Activated B cell treated with CpG ODN at 0.5 μM for 24 hours (primary cell): ENCODE measurements at regions of chr4 and their contacts with region 1.

Region 1: GRCh38 chr4:98995183-98996055 is at the start of gene METAP1:
- DNase-seq: peak; percentile 92
- ATAC-seq: peak; percentile 87
- H3K4me3 Mint-ChIP-seq: peak within 1 kb of the TSS; percentile 86
- H3K27ac Mint-ChIP-seq: peak within 1 kb of the TSS; percentile 94
- H3K4me1 Mint-ChIP-seq: peaks cover 25% of the 10 kb centered on the region
- H3K27me3 Mint-ChIP-seq: no peaks in the 10 kb centered on the region
- CTCF ChIP-seq: no peak
- total RNA-seq, gene METAP1: 29.9 and 38.6 TPM in 2 replicates

Region 2: GRCh38 chr4:98260579-98261290 is 734.7 kb before region 1 on chr4:
- CTCF ChIA-PET with region 1: no interaction called
- POLR2A ChIA-PET with region 1: interaction called, 12 read pairs
- intact Hi-C with region 1: loop called (anchors 1 kb)
- DNase-seq: peak; percentile 89
- ATAC-seq: peak; percentile 93
- H3K4me3 Mint-ChIP-seq: peak overlapping the region; percentile 95
- H3K27ac Mint-ChIP-seq: peak overlapping the region; percentile 94
- H3K4me1 Mint-ChIP-seq: peaks cover 48% of the 10 kb centered on the region
- H3K27me3 Mint-ChIP-seq: no peaks in the 10 kb centered on the region
- CTCF ChIP-seq: no peak

Region 3: GRCh38 chr4:98433691-98434090 is 561.7 kb before region 1 on chr4:
- CTCF ChIA-PET with region 1: no interaction called
- POLR2A ChIA-PET with region 1: no interaction called
- intact Hi-C with region 1: no loop called
- DNase-seq: no peak
- ATAC-seq: no peak
- H3K4me3 Mint-ChIP-seq: no peak overlapping the region
- H3K27ac Mint-ChIP-seq: no peak overlapping the region
- H3K4me1 Mint-ChIP-seq: no peaks in the 10 kb centered on the region
- H3K27me3 Mint-ChIP-seq: no peaks in the 10 kb centered on the region
- CTCF ChIP-seq: no peak

Region 4: GRCh38 chr4:98658287-98659105 is 336.9 kb before region 1 on chr4 and contains the start of gene TSPAN5:
- CTCF ChIA-PET with region 1: no interaction called
- POLR2A ChIA-PET with region 1: interaction called, 6 read pairs
- intact Hi-C with region 1: loop called (anchors 1 kb)
- DNase-seq: peak; percentile 78
- ATAC-seq: peak; percentile 86
- H3K4me3 Mint-ChIP-seq: peak within 1 kb of the TSS; percentile 92
- H3K27ac Mint-ChIP-seq: peak within 1 kb of the TSS; percentile 68
- H3K4me1 Mint-ChIP-seq: peaks cover 51% of the 10 kb centered on the region
- H3K27me3 Mint-ChIP-seq: peaks cover 7% of the 10 kb centered on the region
- CTCF ChIP-seq: no peak
- total RNA-seq, gene TSPAN5: 1.6 and 2.7 TPM in 2 replicates

Region 5: DNA sequence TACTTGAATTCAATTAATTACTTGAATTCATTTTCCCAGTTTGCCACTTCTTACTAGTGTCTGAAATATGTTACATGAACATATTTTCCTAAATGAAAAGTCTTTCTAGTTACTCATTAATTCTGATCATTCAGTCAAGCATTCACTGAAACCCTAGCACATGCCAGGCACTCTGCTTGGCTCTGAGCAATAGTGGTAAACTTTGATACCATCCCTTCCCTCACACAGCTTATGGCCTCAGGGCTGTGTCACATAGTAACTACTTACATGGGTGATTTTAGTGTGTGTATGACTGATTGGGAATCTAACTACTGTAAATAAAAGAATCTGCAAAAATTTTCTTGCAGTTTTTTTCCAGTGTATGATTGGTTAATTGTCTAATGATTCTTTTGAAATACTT is 32.8 kb after region 1 on chr4:
- CTCF ChIA-PET with region 1: no interaction called
- POLR2A ChIA-PET with region 1: interaction called, 3 read pairs
- intact Hi-C with region 1: loop called (anchors 1 kb)
- DNase-seq: no peak
- ATAC-seq: peak; percentile 56
- H3K4me3 Mint-ChIP-seq: no peak overlapping the region
- H3K27ac Mint-ChIP-seq: peak overlapping the region; percentile 13
- H3K4me1 Mint-ChIP-seq: peaks cover 62% of the 10 kb centered on the region
- H3K27me3 Mint-ChIP-seq: no peaks in the 10 kb centered on the region
- CTCF ChIP-seq: no peak

Region 6: GRCh38 chr4:99405433-99406115 is 410.2 kb after region 1 on chr4:
- CTCF ChIA-PET with region 1: interaction called, 16 read pairs
- POLR2A ChIA-PET with region 1: no interaction called
- intact Hi-C with region 1: loop called (anchors 1 kb)
- DNase-seq: no peak
- ATAC-seq: peak; percentile 69
- H3K4me3 Mint-ChIP-seq: no peak overlapping the region
- H3K27ac Mint-ChIP-seq: no peak overlapping the region
- H3K4me1 Mint-ChIP-seq: peaks cover 7% of the 10 kb centered on the region
- H3K27me3 Mint-ChIP-seq: peaks cover 1% of the 10 kb centered on the region
- CTCF ChIP-seq: no peak

Region 7: GRCh38 chr4:99816545-99817308 is 821.3 kb after region 1 on chr4 and contains the start of gene DAPP1:
- CTCF ChIA-PET with region 1: no interaction called
- POLR2A ChIA-PET with region 1: interaction called, 3 read pairs
- intact Hi-C with region 1: loop called (anchors 1 kb)
- DNase-seq: peak; percentile 64
- ATAC-seq: peak; percentile 92
- H3K4me3 Mint-ChIP-seq: peak within 1 kb of the TSS; percentile 89
- H3K27ac Mint-ChIP-seq: peak within 1 kb of the TSS; percentile 88
- H3K4me1 Mint-ChIP-seq: peaks cover 75% of the 10 kb centered on the region
- H3K27me3 Mint-ChIP-seq: no peaks in the 10 kb centered on the region
- CTCF ChIP-seq: no peak
- total RNA-seq, gene DAPP1: 137 and 144 TPM in 2 replicates